HEK293T (cell line): ENCODE measurements at regions of chr15 and their contacts with region 1.

Region 1: GRCh38 chr15:41183581-41183980 is 47.0 kb downstream of the EXD1 start:
- DNase-seq: no peak

Region 2: DNA sequence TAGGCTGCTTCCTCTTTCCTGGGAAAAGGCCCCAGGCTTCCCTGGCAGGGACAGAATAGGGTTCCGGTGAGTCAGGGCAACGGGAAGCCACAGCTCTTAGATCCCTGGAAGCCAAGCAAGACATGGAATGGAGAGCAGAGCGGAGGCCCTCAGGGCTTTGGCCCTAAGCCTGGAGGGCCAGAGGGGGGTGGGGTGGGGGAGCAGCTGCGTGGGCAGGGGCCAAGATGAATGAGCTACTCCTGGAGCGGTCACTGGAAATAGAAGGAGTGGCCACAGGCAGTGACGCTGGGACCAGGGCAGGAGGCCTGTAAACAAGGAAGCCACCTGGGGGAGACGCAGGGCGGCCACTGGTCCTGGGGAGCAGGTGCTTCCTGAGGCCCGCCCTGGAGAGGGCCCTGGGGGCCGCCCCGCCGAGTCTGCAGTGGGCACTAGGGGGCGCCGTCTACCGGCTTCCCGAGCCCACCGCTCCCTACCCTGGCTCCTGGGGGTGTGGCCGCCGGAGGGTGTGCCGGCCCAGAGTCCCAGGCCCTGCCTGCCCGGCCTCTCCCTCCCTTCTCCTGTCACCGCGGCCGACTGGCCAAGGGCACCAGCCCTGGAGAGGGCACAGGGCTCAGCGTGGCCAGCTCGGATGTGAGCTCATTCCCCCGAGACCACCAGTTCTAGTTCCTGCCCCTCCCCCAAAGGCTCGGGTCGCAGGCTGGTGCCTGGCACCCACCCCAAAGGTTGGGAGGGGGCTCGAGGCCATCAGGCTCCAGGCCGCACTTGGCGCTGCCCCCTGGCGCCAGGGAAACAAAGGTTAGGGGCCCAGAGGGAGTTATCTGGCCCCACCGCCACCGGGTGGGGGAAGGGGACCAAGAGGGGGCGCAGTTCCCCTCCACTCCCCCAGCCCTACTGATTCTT is 277.2 kb before region 1 on chr15:
- CTCF ChIA-PET with region 1: interaction called, 15 read pairs
- POLR2A ChIA-PET with region 1: no interaction called
- DNase-seq: peak; percentile 78

Region 3: DNA sequence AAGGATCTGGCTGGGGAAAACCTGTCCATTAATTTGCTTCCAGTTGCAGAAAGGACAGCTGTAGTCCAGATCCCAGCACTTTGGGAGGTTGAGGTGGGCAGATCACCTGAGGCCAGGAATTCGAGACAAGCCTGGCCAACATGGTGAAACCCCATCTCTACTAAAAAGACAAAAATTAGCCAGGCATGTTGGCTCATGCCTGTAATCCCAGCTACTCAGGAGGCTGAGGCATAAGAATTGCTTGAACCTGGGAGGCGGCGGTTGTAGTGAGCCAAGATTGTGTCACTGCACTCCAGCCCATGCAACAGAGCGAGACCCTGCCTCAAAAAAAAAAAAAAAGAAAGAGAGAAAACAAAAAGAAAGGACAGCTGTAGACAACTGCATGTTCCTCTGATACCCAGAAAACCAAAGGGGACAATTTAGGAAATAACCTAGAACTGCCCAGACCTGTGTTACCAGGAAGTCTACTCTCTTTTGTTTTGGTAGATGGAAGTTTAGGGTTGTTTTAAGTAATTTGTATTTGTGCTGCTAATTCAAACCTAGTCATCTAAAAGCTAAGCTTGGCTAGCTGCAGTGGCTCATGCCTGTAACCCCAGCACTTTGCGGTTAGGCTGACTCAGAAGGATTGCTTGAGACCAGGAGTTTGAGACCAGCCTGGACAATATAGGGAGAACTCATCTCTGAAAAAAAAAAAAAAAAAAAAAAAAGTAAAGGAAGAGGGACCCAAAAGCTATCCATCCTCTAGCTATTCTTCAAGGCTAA is 24.3 kb after region 1 on chr15:
- CTCF ChIA-PET with region 1: no interaction called
- POLR2A ChIA-PET with region 1: no interaction called
- DNase-seq: no peak

Region 4: GRCh38 chr15:41276821-41277220 is 93.2 kb after region 1 on chr15:
- CTCF ChIA-PET with region 1: no interaction called
- POLR2A ChIA-PET with region 1: no interaction called
- DNase-seq: no peak